Activated CD4-positive, alpha-beta T cell treated with anti-CD3 and anti-CD28 coated beads for 36 hours (primary cell): ENCODE measurements at regions of chr7 and their contacts with region 1.

Region 1: DNA sequence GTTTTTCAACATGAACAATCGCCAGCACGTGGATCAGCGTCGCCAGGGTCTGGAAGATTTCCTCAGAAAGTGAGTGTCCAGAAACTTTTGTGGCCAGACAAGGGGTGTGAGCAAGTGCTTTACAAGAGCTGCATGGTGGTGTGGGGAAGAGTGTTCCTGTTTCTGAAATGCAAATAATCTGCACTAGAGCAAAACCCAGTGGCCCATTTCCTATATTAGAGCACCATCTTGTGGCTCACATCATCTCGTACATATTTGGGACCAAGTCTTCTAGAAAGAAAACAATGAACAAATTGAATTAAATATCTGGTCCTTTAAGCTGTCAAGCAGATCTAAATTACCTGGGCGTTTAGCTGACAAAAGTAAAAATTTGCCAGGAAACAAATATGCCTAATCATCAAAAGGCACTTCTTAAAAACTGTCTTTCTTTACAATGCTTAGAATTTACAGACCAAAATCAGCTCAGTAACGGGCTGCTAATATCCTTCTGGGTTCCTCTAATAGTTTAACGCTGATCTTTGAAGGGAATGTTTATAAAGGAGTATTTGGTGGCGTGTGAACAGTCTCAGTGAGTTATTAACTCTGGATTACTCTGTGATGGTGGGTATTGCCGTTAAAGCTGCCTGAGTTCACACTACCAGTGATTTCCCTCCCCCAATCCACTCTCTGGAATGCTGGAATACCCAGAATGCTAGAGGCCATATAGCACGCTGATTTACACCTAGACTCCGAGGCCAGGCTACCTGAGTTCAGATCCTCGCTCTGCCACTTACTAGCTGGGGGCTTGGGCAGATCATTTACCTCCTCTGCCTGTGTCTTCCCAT is 73.6 kb downstream of the SNX10 start:
- DNase-seq: peak; percentile 60
- ATAC-seq: peak; percentile 61
- H3K4me3 Mint-ChIP-seq: no peak overlapping the region
- H3K27ac Mint-ChIP-seq: no peak overlapping the region
- H3K4me1 Mint-ChIP-seq: peaks cover 8% of the 10 kb centered on the region
- H3K27me3 Mint-ChIP-seq: no peaks in the 10 kb centered on the region

Region 2: DNA sequence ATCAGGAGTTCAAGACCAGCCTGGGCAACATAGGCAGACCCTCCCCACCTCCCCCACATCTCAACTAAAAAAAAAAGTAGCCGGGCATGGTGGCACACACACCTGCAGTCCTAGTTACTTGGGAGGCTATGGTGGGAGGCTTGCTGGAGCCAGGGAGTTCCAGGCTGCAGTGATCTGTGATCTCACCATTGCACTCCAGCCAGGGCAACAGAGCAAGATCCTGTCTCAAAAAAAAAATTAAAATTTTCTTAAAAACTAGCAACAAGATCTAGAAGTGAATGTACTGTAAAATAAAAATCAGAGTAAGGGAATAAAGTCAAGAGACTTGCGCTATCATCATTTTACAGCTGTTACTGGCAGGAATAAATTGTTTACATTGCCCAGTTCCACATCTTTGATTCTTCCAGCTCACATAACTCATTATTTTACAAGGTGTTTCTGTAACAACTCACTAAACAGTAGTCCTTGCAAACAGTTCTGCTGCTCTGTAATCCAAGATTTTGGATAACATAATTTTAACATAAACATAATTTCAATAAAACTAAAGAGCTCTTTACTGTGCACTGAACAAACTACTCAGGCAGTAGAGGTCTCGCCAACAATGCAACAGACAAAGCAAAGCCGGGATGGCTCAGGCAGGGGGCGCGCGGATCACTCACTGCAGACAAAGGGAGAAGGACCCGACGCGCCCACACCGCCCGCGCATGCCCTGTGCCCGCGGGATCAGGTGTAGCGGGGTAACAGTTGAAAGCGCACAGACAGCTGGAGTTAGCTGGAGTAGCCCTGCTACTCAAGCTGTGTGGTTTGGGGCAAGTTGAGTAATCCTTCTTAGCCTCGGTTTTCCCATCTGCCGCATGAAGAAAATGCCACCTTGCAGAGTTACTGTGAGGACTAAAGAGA is 286.6 kb before region 1 on chr7:
- CTCF ChIA-PET with region 1: interaction called, 9 read pairs
- POLR2A ChIA-PET with region 1: interaction called, 3 read pairs
- intact Hi-C with region 1: loop called (anchors 1 to 5 kb)
- DNase-seq: peak; percentile 90
- ATAC-seq: peak; percentile 99
- H3K4me3 Mint-ChIP-seq: no peak overlapping the region
- H3K27ac Mint-ChIP-seq: no peak overlapping the region
- H3K4me1 Mint-ChIP-seq: peaks cover 3% of the 10 kb centered on the region
- H3K27me3 Mint-ChIP-seq: peaks cover 13% of the 10 kb centered on the region

Region 3: DNA sequence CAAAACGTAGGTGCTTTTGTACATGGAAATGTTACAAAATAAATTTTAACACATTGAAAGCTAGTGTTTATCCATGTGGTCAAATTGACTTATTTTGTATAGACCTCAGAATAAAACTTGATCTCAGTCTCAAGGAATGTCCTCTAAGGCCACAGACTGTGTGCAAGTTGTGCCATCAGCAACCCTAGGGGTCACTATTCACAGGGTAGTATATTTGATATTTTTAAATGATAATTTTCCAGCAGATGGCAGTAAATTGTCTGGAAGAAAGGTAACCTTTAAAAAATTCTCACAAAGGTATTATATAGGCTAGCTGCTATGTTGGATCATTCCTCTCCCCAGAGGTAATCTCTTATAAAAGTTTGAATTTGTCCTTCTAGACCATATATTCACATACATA is 86.5 kb before region 1 on chr7:
- CTCF ChIA-PET with region 1: interaction called, 5 read pairs
- POLR2A ChIA-PET with region 1: no interaction called
- intact Hi-C with region 1: loop called in 1 of 2 experiments (anchors 1 kb)
- DNase-seq: no peak
- ATAC-seq: peak; percentile 25
- H3K4me3 Mint-ChIP-seq: no peak overlapping the region
- H3K27ac Mint-ChIP-seq: no peak overlapping the region
- H3K4me1 Mint-ChIP-seq: peaks cover 19% of the 10 kb centered on the region
- H3K27me3 Mint-ChIP-seq: no peaks in the 10 kb centered on the region

Region 4: DNA sequence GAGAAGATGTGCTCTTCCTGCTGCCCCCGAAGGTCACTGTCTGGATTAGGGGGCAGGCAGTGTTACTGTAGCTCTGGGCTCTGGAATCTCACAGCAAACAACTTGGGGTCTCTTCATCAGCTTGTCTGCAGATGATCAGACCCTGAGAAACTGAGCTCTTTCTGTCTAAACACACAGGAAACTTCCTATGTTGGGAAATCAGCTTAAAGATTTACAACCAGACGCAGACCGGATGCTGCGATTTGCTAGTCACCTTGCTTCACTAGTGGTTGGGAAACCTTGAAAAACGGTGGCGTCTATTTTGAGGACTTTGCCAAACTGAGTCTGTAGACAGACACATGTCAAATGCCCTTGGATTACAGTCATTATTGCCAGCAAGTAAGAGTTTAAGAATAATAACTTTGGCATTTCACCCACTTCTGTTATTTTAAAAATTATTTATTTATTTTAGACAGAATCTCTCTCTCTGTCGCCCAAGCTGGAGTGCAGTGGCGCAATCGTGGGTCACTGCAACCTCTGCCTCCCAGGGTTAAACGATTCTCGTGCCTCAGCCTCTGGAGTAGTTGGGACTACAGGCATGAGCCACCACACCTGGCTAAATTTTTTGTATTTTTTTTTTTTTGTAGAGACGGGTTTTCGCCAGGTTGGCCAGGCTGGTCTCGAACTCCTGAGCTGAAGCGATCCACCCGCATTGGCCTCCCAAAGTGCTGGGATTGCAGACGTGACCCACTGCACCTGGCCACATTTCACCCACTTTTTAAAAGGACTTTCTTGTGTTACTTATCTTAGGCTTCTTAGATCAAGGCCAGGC is 59.6 kb before region 1 on chr7:
- CTCF ChIA-PET with region 1: interaction called, 13 read pairs
- POLR2A ChIA-PET with region 1: no interaction called
- intact Hi-C with region 1: no loop called
- DNase-seq: peak; percentile 41
- ATAC-seq: peak; percentile 61
- H3K4me3 Mint-ChIP-seq: no peak overlapping the region
- H3K27ac Mint-ChIP-seq: peak overlapping the region; percentile 17
- H3K4me1 Mint-ChIP-seq: peaks cover 10% of the 10 kb centered on the region
- H3K27me3 Mint-ChIP-seq: no peaks in the 10 kb centered on the region

Region 5: GRCh38 chr7:26376175-26376917 is 11.1 kb after region 1 on chr7:
- CTCF ChIA-PET with region 1: interaction called, 16 read pairs
- POLR2A ChIA-PET with region 1: no interaction called
- intact Hi-C with region 1: no loop called
- DNase-seq: peak; percentile 65
- ATAC-seq: peak; percentile 27
- H3K4me3 Mint-ChIP-seq: peak overlapping the region; percentile 70
- H3K27ac Mint-ChIP-seq: no peak overlapping the region
- H3K4me1 Mint-ChIP-seq: peaks cover 5% of the 10 kb centered on the region
- H3K27me3 Mint-ChIP-seq: peaks cover 22% of the 10 kb centered on the region

Region 6: GRCh38 chr7:26500749-26501352 is 135.6 kb after region 1 on chr7:
- CTCF ChIA-PET with region 1: interaction called, 17 read pairs
- POLR2A ChIA-PET with region 1: no interaction called
- intact Hi-C with region 1: loop called (anchors 1 to 2 kb)
- DNase-seq: no peak
- ATAC-seq: no peak
- H3K4me3 Mint-ChIP-seq: no peak overlapping the region
- H3K27ac Mint-ChIP-seq: no peak overlapping the region
- H3K4me1 Mint-ChIP-seq: no peaks in the 10 kb centered on the region
- H3K27me3 Mint-ChIP-seq: peaks cover 3% of the 10 kb centered on the region

Region 7: DNA sequence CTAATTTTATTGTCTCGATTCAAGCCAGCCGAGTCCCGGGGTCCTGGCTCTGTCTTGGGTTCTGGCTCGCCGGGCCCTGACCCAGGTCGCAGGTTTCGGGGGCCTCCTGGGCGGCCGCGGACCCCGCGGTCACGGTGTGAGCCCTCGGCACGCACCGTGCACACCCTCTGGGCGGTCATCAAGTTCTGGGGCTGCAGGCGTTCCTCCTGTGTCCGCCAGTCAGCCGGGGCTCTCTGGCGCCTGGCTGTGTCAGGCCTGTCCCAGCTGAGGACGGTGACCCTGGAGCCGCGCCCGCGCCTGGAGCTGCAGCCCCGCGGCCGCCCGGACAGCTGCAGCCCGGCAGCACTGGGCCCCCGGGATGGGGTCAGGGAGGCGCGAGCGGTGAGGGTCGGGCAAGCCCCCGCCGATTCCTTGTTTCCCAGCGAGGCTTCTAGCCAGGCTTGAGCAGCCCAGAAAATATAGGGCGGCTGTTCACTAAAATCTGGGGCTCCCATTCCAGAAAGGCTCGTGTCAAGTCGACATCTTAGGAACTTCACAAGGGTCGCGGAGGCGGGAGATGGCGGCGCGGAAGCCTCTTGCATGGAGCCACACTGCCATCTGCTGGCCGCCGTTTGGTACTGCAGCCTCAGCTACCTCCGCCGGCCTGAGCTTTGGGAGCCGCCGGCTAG is 795.4 kb after region 1 on chr7:
- CTCF ChIA-PET with region 1: interaction called, 13 read pairs
- POLR2A ChIA-PET with region 1: no interaction called
- intact Hi-C with region 1: loop called (anchors 2 kb)
- DNase-seq: peak; percentile 91
- ATAC-seq: peak; percentile 50
- H3K4me3 Mint-ChIP-seq: peak overlapping the region; percentile 62
- H3K27ac Mint-ChIP-seq: no peak overlapping the region
- H3K4me1 Mint-ChIP-seq: peaks cover 24% of the 10 kb centered on the region
- H3K27me3 Mint-ChIP-seq: peaks cover 74% of the 10 kb centered on the region